ENCODE measurements at regions of chr3 and their contacts with region 1.

Region 1: GRCh38 chr3:99842826-99843589 is 25.3 kb downstream of the CMSS1 start:
- DNase-seq: peak; percentile 74
- H3K4me3 ChIP-seq: no peak overlapping the region
- H3K27ac ChIP-seq: no peak overlapping the region
- H3K4me1 ChIP-seq: peaks cover 14% of the 10 kb centered on the region
- H3K27me3 ChIP-seq: no peaks in the 10 kb centered on the region
- CTCF ChIP-seq: peak; percentile 40 to 53
- POLR2A ChIP-seq: no peak

Region 2: GRCh38 chr3:99859825-99860224 is 16.8 kb after region 1 on chr3:
- CTCF ChIA-PET with region 1: interaction called, 38 read pairs
- POLR2A ChIA-PET with region 1: no interaction called
- dilution Hi-C with region 1: no loop called
- intact Hi-C with region 1: no loop called
- DNase-seq: peak; percentile 32
- H3K4me3 ChIP-seq: no peak overlapping the region
- H3K27ac ChIP-seq: peak overlapping the region; percentile 2
- H3K4me1 ChIP-seq: peaks cover 26% of the 10 kb centered on the region
- H3K27me3 ChIP-seq: no peaks in the 10 kb centered on the region
- CTCF ChIP-seq: no peak
- POLR2A ChIP-seq: no peak

Region 3: DNA sequence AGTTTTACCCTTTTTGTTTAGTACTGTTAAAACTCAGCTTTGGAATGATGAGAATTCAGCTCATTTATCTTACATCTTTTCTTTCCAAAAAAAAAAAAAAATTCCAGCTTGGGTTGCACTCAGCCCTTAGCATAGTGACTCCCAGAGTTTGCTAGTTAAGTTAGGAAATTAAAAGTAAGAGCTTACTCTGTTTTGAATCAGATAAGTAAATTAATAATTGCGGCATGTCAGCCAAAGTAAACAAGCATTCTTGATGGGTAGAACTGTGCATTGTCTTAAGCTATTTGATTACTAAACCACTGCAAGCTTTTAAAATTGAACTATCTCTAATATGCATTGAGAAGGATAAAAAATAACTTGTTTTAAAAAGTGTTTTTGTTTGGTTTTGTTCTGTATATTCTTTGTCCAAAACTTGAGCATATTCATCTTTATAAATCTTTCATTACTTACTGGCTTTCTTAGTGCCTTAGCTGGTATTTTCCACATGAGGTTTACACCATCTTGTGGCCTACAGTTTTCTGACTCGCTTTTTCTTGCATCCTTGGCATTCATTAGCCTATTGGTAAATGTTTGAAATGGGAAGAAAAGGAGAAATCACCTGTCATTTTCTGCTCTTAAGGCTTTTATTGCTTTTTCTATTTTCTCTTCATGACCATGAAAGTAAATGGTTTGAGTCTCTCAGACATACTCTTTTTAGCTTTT is 163.7 kb after region 1 on chr3:
- CTCF ChIA-PET with region 1: interaction called, 26 read pairs
- POLR2A ChIA-PET with region 1: no interaction called
- dilution Hi-C with region 1: no loop called
- intact Hi-C with region 1: no loop called
- DNase-seq: peak; percentile 72
- H3K4me3 ChIP-seq: no peak overlapping the region
- H3K27ac ChIP-seq: no peak overlapping the region
- H3K4me1 ChIP-seq: peaks cover 73% of the 10 kb centered on the region
- H3K27me3 ChIP-seq: no peaks in the 10 kb centered on the region
- CTCF ChIP-seq: no peak
- POLR2A ChIP-seq: no peak

Region 4: GRCh38 chr3:100047455-100048141 is 204.6 kb after region 1 on chr3:
- CTCF ChIA-PET with region 1: interaction called, 35 read pairs
- POLR2A ChIA-PET with region 1: no interaction called
- dilution Hi-C with region 1: no loop called
- intact Hi-C with region 1: no loop called
- DNase-seq: peak; percentile 58
- H3K4me3 ChIP-seq: no peak overlapping the region
- H3K27ac ChIP-seq: peak overlapping the region; percentile 28
- H3K4me1 ChIP-seq: peaks cover 33% of the 10 kb centered on the region
- H3K27me3 ChIP-seq: no peaks in the 10 kb centered on the region
- CTCF ChIP-seq: no peak
- POLR2A ChIP-seq: no peak

Region 5: DNA sequence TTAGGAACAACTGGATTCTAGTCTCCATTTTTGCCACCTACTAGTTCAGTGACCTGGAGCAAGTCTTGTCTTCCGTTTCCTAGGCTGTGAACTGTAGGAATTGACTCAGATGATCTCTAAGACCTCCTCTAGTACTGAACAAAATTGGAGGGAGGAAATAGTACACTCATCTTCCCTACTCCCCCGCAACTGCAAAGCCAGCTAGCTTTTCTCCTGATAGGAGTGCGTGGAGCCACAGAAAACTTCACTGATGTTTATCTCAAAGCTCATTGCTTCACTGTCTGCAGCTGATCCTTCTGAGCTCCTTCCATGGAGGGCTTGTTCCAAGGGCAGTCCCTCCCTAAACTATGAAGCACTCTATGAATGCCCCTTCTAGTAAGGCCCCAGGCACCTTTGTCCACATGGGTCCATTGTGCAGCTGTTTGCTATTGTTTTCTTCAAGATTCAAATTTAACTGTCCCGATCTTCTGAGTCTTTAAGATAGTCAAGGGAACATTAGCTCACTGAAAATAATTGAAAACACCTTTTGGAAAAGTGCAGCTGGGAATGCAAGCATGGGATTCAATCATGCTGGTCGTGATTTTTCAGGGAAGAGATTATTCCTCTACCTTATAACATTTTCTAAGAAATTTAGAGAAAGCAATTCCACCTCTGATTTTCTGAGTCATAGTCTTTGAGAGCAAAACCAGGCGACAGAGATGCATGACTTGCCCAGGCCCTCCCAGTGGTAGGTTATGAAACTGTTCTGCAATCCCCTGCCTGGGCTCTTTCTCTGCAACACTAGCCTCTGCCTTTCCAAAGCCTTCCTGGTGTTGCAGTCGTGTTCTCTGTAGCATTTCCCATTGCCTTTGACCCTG is 247.0 kb after region 1 on chr3:
- CTCF ChIA-PET with region 1: interaction called, 16 read pairs
- POLR2A ChIA-PET with region 1: no interaction called
- dilution Hi-C with region 1: no loop called
- intact Hi-C with region 1: no loop called
- DNase-seq: no peak
- H3K4me3 ChIP-seq: no peak overlapping the region
- H3K27ac ChIP-seq: no peak overlapping the region
- H3K4me1 ChIP-seq: peaks cover 5% of the 10 kb centered on the region
- H3K27me3 ChIP-seq: no peaks in the 10 kb centered on the region
- CTCF ChIP-seq: peak; percentile 11 to 55
- POLR2A ChIP-seq: no peak

Region 6: DNA sequence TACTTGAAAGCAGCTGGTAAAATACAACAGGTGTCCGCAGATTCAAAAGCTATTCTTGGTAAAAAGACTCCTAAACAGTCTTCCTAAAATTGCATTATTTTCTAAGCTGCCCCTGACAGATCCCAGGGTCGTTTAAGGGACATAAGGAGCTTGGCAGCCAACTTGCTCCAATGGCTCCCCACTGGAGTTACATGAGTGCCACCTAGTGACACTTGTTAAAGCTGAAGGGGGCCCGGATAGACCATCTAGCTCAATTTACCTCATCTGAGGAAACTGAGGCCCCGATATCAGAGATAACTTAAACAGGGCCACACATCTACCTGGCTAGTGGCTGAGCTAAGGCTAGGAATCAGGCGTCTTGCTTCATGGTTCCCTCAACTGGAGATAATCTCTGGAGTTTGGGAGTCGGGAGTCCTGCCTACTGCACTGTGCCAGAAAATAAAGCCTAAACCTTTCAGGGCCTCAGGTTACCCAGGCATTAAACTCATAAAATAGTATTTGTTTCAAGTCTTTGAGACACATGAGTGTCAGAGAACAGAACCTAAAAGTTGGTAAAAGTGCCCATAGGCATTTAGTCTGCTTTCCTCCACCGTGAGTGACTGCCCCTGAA is 411.3 kb after region 1 on chr3:
- CTCF ChIA-PET with region 1: interaction called, 238 read pairs
- POLR2A ChIA-PET with region 1: interaction called, 3 read pairs
- dilution Hi-C with region 1: no loop called
- intact Hi-C with region 1: loop called (anchors 1 kb)
- DNase-seq: peak; percentile 75
- H3K4me3 ChIP-seq: no peak overlapping the region
- H3K27ac ChIP-seq: no peak overlapping the region
- H3K4me1 ChIP-seq: no peaks in the 10 kb centered on the region
- H3K27me3 ChIP-seq: no peaks in the 10 kb centered on the region
- CTCF ChIP-seq: peak; percentile 76 to 81
- POLR2A ChIP-seq: no peak